ENCODE measurements at regions of chr9 and their contacts with region 1.

Region 1: GRCh38 chr9:100714372-100715099 is 136.7 kb downstream of the CAVIN4 start:
- ATAC-seq: peak; percentile 89 to 100 (median 94)
- H3K4me3 ChIP-seq: no peak overlapping the region
- H3K27ac ChIP-seq: no peak overlapping the region
- H3K4me1 ChIP-seq: peaks cover 0 to 8% of the 10 kb centered on the region in 2 donors

Region 2: GRCh38 chr9:101235105-101235866 is 520.8 kb after region 1 on chr9:
- in situ Hi-C with region 1: loop called in 2 of 9 experiments (anchors 10 to 25 kb)
- ATAC-seq: peak; percentile 54 to 94 (median 72)
- H3K4me3 ChIP-seq: no peak overlapping the region
- H3K27ac ChIP-seq: no peak overlapping the region
- H3K4me1 ChIP-seq: peaks cover 0 to 7% of the 10 kb centered on the region in 2 donors

Region 3: DNA sequence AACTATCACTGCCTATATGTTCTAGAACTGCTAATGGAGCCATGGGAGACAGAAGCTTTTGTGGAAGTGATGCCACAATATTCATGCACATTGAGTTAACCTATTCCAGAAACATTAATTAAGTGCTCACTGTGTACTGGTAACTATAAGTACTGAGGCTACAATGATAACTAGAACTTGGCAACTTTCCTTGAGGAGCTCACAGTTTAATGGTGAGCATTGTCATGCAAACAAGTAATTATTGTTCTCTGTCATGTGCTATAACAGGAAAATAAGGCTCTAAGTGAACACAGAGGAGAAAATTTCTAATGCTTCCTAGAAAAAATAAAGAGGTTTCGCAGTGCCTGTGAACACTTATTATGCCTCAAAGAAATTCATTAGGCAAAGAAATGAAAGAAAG is 528.1 kb after region 1 on chr9:
- in situ Hi-C with region 1: loop called in 2 of 9 experiments (anchors 10 to 25 kb)
- ATAC-seq: no peak
- H3K4me3 ChIP-seq: no peak overlapping the region
- H3K27ac ChIP-seq: no peak overlapping the region
- H3K4me1 ChIP-seq: no peaks in the 10 kb centered on the region

Region 4: GRCh38 chr9:101311758-101312420 is 597.4 kb after region 1 on chr9:
- in situ Hi-C with region 1: loop called in 5 of 9 experiments (anchors 25 kb)
- ATAC-seq: peak; percentile 49 to 86 (median 66)
- H3K4me3 ChIP-seq: no peak overlapping the region
- H3K27ac ChIP-seq: no peak overlapping the region
- H3K4me1 ChIP-seq: peaks cover 0 to 2% of the 10 kb centered on the region in 2 donors